Activated CD4-positive, alpha-beta memory T cell treated with anti-CD3 and anti-CD28 coated beads for 36 hours (primary cell): ENCODE measurements at regions of chr14 and their contacts with region 1.

Region 1: GRCh38 chr14:51979088-51979709 is 10.1 kb upstream of the RTRAF start:
- DNase-seq: peak; percentile 88
- H3K4me3 Mint-ChIP-seq: no peak overlapping the region
- H3K27ac Mint-ChIP-seq: no peak overlapping the region
- H3K4me1 Mint-ChIP-seq: peaks cover 10% of the 10 kb centered on the region
- H3K27me3 Mint-ChIP-seq: no peaks in the 10 kb centered on the region

Region 2: DNA sequence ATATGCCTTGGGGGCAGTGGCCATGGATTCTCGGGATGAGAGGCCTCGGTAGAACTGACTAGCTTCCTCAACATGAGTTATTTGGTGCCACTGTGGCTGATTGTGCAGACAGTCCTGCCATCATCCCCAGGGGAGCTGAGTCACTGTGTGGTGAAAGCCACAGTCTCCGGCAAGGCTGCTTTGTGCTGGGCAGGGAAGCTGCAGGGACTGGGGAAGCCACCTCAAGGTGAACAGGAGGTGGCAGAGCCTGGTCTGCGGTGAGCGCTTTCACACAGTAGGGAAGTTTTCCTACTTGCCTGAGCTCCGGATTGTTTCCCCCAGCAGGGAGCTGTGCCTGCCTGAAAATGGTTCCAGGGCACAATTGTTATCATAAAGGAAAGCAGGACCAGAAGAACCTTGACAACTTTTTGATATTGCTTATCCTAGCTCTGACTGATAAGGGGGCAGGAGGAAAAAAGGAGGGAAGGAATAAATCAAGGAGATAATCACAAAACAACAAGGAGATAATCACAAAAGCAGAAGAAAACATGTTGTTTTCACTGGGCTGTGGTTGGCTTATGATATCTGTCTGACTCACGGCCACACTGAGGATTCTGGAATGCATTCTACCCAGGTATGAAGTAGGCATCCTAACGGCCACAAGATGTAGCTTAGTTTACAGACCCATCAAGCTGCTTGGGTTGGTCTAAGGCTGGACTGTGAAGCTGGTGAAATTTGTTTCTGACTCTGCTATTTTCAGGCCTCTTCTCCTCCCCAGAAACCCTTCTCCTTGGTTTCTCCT is 151.0 kb before region 1 on chr14:
- CTCF ChIA-PET with region 1: interaction called, 10 read pairs
- POLR2A ChIA-PET with region 1: no interaction called
- intact Hi-C with region 1: loop called (anchors 1 kb)
- DNase-seq: peak; percentile 90
- H3K4me3 Mint-ChIP-seq: no peak overlapping the region
- H3K27ac Mint-ChIP-seq: no peak overlapping the region
- H3K4me1 Mint-ChIP-seq: no peaks in the 10 kb centered on the region
- H3K27me3 Mint-ChIP-seq: no peaks in the 10 kb centered on the region

Region 3: DNA sequence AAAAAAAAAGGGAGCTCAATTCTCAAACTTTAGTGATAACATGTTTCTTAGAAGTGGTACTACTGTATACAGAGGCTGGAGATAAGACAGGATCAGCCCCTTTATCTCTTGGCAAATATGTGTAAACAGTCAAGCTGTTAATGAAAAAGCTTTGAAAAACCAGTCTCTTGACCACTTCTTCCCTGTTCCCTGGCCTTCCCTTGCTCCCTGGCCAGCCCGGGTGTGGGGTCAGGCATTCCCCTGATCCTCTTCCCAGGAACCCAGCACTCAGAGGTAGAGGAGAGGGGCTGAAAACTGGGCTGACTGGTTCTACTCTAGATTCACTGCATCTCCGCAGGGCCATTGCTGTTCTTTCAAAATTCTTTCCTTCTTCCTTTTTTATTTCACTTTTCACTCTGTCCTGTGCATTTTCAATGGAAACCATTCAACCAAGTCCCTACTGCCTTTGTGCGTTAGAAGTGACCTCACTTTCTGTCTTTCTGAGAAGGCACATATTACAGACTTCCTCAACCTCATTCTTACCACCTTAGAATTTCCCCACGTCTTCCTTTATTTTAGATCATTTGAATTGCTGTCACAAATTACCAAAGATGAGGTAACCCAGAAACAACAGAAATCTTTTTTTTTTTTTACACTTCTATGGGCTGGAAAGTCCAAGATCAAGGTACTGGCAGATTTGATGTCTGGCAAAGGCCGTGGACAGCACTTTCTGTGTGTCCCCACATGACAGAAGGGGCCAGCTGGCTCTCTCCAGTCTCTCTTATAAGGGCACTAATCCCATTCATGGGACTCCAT is 113.0 kb before region 1 on chr14:
- CTCF ChIA-PET with region 1: interaction called, 14 read pairs
- POLR2A ChIA-PET with region 1: interaction called, 4 read pairs
- intact Hi-C with region 1: loop called (anchors 1 kb)
- DNase-seq: peak; percentile 46
- H3K4me3 Mint-ChIP-seq: no peak overlapping the region
- H3K27ac Mint-ChIP-seq: no peak overlapping the region
- H3K4me1 Mint-ChIP-seq: peaks cover 19% of the 10 kb centered on the region
- H3K27me3 Mint-ChIP-seq: no peaks in the 10 kb centered on the region

Region 4: DNA sequence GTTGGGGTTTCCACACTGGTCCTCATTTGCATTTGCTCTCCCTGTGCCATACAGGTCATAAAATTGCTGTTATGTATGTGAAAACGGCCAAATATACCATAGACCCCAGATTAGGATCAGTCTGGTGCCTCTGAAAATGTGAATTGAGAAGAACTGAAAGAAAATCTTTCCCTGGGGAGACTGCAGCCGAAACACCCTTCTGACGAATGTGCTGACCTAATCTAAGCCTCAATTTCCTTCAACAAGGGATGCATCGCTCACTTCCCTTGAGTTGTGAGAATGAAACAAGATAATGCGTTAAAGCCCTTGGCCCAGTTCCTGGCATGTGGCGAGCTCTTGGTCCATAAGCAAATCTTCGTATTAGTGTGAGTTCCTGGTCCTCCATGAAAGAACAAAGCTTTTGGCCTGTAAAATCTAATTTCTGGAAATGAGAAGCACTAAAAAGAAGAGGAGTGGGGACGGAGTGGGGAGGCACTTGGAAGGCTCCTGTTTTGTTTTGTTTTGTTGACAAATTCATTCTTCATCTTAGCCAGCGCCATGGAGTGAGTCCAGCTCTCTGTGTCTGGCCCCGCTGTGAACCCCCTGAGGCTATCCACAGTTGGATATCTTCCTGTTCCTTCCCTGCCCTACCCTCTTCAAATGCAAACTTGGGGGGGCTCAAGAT is 39.3 kb before region 1 on chr14:
- CTCF ChIA-PET with region 1: no interaction called
- POLR2A ChIA-PET with region 1: no interaction called
- intact Hi-C with region 1: no loop called
- DNase-seq: no peak
- H3K4me3 Mint-ChIP-seq: no peak overlapping the region
- H3K27ac Mint-ChIP-seq: peak overlapping the region; percentile 18
- H3K4me1 Mint-ChIP-seq: peaks cover 54% of the 10 kb centered on the region
- H3K27me3 Mint-ChIP-seq: no peaks in the 10 kb centered on the region

Region 5: GRCh38 chr14:51989293-51990234 is 10.4 kb after region 1 on chr14 and contains the start of gene RTRAF:
- CTCF ChIA-PET with region 1: interaction called, 15 read pairs
- POLR2A ChIA-PET with region 1: no interaction called
- intact Hi-C with region 1: no loop called
- DNase-seq: peak; percentile 94
- H3K4me3 Mint-ChIP-seq: peak within 1 kb of the TSS; percentile 89
- H3K27ac Mint-ChIP-seq: peak within 1 kb of the TSS; percentile 79
- H3K4me1 Mint-ChIP-seq: peaks cover 35% of the 10 kb centered on the region
- H3K27me3 Mint-ChIP-seq: no peaks in the 10 kb centered on the region
- total RNA-seq, gene RTRAF: 222 to 238 TPM

Region 6: GRCh38 chr14:52068615-52069303 is 89.6 kb after region 1 on chr14 and contains the start of gene NID2:
- CTCF ChIA-PET with region 1: no interaction called
- POLR2A ChIA-PET with region 1: no interaction called
- intact Hi-C with region 1: no loop called
- DNase-seq: peak; percentile 60
- H3K4me3 Mint-ChIP-seq: peak within 1 kb of the TSS; percentile 48
- H3K27ac Mint-ChIP-seq: no peak within 1 kb of the TSS
- H3K4me1 Mint-ChIP-seq: peaks cover 29% of the 10 kb centered on the region
- H3K27me3 Mint-ChIP-seq: peaks cover 47% of the 10 kb centered on the region
- total RNA-seq, gene NID2: not detected